ENCODE measurements at regions of chr1 and their contacts with region 1.

Region 1: GRCh38 chr1:24744911-24745710 is at the start of gene CLIC4:
- DNase-seq: peak; percentile 96 to 100 (median 98)

Region 2: GRCh38 chr1:24642481-24643361 is 102.4 kb before region 1 on chr1 and contains the start of gene SRRM1:
- intact Hi-C with region 1: loop called (anchors 1 kb)
- DNase-seq: peak; percentile 98 to 100 (median 100)

Region 3: DNA sequence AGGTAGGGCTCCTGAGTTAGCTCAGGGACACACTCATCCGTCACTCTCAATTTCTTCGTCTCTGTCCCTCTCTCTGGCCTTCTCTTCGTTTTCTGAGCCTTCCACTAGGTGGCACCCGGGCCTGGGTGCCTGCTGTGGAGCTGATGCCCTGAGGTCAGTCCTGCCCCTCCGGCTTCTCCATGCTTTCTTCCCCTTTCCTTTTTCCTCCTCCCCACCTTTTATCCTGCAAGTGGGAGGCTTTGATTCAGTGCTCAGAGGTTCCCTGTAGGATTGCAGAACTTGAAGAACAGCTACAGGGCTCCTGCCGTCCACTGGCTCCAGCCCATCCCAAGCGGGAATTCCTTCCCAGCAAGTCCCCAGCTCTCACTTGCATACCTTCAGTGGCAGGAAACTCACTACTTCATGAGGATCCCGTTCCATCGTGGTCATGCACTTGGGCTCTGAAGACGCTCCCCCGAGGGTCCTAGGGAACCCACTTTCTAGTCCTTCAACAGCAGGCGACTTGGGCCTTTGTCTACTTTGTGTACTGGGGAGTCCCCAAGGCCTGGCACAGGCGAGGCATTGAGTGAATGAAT is 56.4 kb before region 1 on chr1:
- intact Hi-C with region 1: loop called (anchors 1 kb)
- DNase-seq: peak; percentile 39 to 96 (median 78)

Region 4: GRCh38 chr1:24714859-24715520 is 30.1 kb before region 1 on chr1:
- intact Hi-C with region 1: loop called (anchors 1 kb)
- DNase-seq: peak; percentile 74 to 97 (median 82)

Region 5: GRCh38 chr1:24727501-24728216 is 17.5 kb before region 1 on chr1:
- intact Hi-C with region 1: loop called (anchors 1 kb)
- DNase-seq: peak in 3 of 10 donors; percentile 27 to 89 (median 59)

Region 6: GRCh38 chr1:24830680-24831272 is 85.7 kb after region 1 on chr1:
- intact Hi-C with region 1: loop called (anchors 5 kb)
- DNase-seq: no peak